Activated CD4-positive, alpha-beta T cell treated with anti-CD3 and anti-CD28 coated beads for 36 hours (primary cell): ENCODE measurements at regions of chr5 and their contacts with region 1.

Region 1: DNA sequence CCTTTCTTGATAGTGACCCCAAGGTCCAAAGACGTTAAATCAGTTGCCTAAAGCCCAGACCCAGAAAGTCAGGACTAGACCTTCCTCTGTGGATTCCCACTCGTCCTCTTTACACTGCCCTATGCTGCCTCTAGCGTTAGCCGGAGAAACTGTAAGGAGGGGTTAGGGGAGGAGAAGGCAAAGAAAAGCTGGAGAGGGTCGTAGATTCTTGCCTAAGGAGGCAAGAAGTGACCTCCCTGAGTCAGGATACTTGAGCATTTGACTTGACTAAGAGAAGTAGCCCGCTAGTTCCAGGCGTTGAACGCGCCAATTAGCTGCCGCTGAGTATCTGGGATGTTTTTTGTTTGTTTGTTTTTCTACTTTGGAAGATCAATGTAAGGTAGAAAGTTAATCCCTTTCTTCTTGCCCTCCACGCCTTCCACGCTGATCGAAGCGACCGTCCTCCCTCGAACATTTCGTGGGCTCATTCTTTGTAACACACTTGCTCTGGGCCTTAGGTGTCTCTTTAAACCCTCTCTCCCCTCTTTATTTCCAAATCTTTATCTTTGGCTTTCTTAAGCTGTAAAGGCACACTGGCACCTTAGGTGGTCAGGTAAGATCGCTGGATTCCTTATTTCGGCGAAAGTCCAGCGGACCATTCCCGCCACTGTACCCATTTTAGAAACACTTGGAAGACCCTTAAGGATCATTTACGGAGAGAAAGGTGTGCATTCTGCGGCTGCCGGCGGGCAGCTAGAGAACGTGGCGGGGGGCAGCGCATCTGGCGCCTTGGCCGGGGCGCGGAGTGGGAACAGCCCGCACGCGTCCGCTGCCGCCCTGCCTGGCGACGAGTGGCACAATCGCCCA is 5.1 kb upstream of the RGMB start:
- DNase-seq: peak; percentile 52
- ATAC-seq: peak; percentile 45
- H3K4me3 Mint-ChIP-seq: peak overlapping the region; percentile 76
- H3K27ac Mint-ChIP-seq: no peak overlapping the region
- H3K4me1 Mint-ChIP-seq: peaks cover 37% of the 10 kb centered on the region
- H3K27me3 Mint-ChIP-seq: peaks cover 45% of the 10 kb centered on the region

Region 2: DNA sequence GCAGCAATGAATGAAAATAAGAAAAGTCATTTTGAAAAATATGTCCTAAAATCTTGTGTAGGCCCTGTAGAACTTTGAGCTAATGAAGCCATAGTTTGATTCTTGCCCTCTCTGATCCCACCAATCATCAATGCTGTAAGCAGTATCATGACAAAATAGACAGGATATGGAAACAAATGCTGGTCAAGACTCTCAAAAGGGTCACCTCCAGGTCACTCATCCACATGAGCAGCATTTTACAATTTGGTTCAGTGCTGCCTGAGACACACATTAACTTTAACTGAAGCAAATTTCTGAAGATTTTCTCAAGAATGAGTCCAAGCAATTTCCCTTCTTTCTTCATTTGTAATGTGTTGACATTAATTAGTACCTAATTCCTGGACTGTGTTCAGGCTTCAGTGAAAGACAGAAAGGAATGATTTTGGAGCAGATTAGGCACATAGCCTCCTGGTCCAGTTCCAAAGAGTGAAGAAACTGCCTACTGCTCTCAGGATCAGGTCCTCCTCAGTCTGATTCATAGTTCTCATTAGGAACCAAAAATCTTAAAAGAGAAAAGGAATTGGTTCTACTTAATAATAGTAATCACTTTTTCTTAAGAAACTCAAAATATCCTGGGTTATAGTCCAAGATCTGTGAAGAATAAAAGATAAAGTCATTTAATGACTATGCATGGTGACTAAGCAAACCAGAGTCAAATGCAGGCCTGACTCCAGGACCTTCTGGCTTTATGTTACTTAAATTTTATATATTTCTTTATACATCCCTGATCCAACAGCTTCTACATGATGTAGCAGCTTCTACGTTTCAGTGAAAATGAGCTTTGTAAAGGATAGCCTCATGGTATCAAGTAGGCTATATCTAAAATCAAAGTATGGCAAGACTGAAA is 187.0 kb before region 1 on chr5:
- CTCF ChIA-PET with region 1: no interaction called
- POLR2A ChIA-PET with region 1: no interaction called
- intact Hi-C with region 1: no loop called
- DNase-seq: no peak
- ATAC-seq: no peak
- H3K4me3 Mint-ChIP-seq: no peak overlapping the region
- H3K27ac Mint-ChIP-seq: no peak overlapping the region
- H3K4me1 Mint-ChIP-seq: no peaks in the 10 kb centered on the region
- H3K27me3 Mint-ChIP-seq: peaks cover 5% of the 10 kb centered on the region

Region 3: GRCh38 chr5:98755406-98755805 is 13.0 kb before region 1 on chr5:
- CTCF ChIA-PET with region 1: interaction called, 25 read pairs
- POLR2A ChIA-PET with region 1: no interaction called
- intact Hi-C with region 1: no loop called
- DNase-seq: no peak
- ATAC-seq: no peak
- H3K4me3 Mint-ChIP-seq: no peak overlapping the region
- H3K27ac Mint-ChIP-seq: no peak overlapping the region
- H3K4me1 Mint-ChIP-seq: no peaks in the 10 kb centered on the region
- H3K27me3 Mint-ChIP-seq: peaks cover 8% of the 10 kb centered on the region

Region 4: DNA sequence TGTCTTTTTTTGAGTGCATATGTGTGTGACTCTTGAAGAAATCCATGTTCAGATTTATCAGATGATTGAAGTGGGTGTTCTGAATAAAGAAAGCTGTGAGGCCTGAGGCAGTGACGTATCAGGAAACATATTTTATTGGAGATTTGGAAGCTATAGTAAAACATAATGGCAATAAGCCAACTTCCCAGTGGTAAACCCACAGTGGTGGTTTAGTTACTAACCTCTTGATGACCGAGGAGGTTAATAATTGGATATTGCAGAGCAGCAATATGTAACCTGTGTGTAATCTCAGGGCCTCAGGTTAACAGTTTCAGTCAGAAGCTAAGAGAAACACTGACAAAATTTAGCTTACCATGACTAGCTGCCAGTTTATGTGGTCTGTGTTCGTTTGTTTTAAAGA is 12.0 kb after region 1 on chr5:
- CTCF ChIA-PET with region 1: interaction called, 30 read pairs
- POLR2A ChIA-PET with region 1: no interaction called
- intact Hi-C with region 1: no loop called
- DNase-seq: no peak
- ATAC-seq: no peak
- H3K4me3 Mint-ChIP-seq: no peak overlapping the region
- H3K27ac Mint-ChIP-seq: no peak overlapping the region
- H3K4me1 Mint-ChIP-seq: peaks cover 26% of the 10 kb centered on the region
- H3K27me3 Mint-ChIP-seq: peaks cover 4% of the 10 kb centered on the region

Region 5: DNA sequence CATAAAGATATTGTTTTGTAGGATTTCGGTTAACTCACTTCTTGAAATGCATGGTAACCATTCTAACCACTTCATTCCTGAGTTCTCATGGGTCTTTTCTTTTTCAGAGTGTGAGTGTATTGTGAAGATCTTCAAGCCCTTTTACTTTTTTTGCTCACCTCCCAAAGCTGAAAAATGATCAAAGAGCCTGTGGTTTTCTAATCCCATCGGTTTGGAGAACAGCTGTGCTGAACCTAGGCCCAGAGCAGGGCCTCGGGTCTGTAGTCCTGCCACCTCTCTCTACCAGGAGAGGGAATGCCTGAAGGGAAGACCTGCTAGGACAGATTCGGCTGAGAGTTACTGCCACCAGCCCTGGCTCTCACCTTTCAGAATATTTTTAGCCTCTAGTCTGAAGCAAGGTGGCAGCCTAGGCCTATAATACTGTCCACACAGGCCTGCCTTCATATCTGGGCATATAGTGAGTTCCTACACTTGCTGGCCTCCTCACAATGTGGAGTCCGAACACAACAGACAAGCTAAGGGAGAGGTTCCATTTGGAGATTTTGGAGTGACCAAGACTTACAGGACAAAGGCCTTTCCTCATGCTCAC is 18.8 kb after region 1 on chr5:
- CTCF ChIA-PET with region 1: interaction called, 10 read pairs
- POLR2A ChIA-PET with region 1: no interaction called
- intact Hi-C with region 1: no loop called
- DNase-seq: no peak
- ATAC-seq: no peak
- H3K4me3 Mint-ChIP-seq: no peak overlapping the region
- H3K27ac Mint-ChIP-seq: no peak overlapping the region
- H3K4me1 Mint-ChIP-seq: peaks cover 17% of the 10 kb centered on the region
- H3K27me3 Mint-ChIP-seq: no peaks in the 10 kb centered on the region

Region 6: DNA sequence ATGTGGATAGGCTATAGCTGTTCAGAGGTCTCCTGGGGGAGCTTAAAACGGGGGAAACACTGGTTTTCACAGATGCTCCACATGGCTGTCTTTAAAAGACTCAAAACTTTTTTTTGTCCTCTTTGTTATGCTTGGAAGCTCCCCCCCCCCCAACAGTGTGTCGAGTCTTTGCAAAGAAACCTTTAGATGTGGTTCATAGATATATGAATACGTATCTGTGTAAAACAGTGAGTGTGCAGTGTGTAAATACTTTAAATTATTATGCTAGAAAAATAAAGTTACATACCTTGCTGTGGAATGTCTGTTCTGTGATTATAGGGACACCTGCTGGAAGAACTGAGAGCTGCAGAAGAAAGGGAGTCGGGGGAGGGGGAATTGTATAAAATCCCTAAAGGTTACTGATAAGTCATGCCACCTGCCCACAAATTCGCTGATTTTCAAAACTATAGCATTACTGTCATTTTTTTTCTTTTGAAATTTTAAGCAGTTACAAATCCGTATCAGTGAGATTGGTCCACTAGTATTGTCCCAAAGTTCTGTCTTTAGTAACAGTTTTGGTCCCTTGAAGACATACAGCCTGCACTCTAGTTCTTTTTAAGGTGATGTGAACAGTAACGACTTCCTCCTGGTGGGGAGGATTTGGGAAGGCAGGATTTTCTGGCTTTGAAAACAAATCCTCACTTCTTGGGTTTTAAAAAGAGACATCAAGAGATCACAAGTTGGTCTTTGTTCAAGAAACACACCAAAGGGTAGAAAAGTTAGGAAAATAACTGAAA is 28.0 kb after region 1 on chr5:
- CTCF ChIA-PET with region 1: interaction called, 38 read pairs
- POLR2A ChIA-PET with region 1: no interaction called
- intact Hi-C with region 1: loop called in 1 of 2 experiments (anchors 1 kb)
- DNase-seq: peak; percentile 68
- ATAC-seq: peak; percentile 84
- H3K4me3 Mint-ChIP-seq: no peak overlapping the region
- H3K27ac Mint-ChIP-seq: no peak overlapping the region
- H3K4me1 Mint-ChIP-seq: peaks cover 6% of the 10 kb centered on the region
- H3K27me3 Mint-ChIP-seq: no peaks in the 10 kb centered on the region

Region 7: GRCh38 chr5:98827161-98827560 is 58.8 kb after region 1 on chr5:
- CTCF ChIA-PET with region 1: interaction called, 3 read pairs
- POLR2A ChIA-PET with region 1: no interaction called
- intact Hi-C with region 1: loop called in 1 of 2 experiments (anchors 2 kb)
- DNase-seq: no peak
- ATAC-seq: no peak
- H3K4me3 Mint-ChIP-seq: no peak overlapping the region
- H3K27ac Mint-ChIP-seq: no peak overlapping the region
- H3K4me1 Mint-ChIP-seq: no peaks in the 10 kb centered on the region
- H3K27me3 Mint-ChIP-seq: no peaks in the 10 kb centered on the region

Region 8: DNA sequence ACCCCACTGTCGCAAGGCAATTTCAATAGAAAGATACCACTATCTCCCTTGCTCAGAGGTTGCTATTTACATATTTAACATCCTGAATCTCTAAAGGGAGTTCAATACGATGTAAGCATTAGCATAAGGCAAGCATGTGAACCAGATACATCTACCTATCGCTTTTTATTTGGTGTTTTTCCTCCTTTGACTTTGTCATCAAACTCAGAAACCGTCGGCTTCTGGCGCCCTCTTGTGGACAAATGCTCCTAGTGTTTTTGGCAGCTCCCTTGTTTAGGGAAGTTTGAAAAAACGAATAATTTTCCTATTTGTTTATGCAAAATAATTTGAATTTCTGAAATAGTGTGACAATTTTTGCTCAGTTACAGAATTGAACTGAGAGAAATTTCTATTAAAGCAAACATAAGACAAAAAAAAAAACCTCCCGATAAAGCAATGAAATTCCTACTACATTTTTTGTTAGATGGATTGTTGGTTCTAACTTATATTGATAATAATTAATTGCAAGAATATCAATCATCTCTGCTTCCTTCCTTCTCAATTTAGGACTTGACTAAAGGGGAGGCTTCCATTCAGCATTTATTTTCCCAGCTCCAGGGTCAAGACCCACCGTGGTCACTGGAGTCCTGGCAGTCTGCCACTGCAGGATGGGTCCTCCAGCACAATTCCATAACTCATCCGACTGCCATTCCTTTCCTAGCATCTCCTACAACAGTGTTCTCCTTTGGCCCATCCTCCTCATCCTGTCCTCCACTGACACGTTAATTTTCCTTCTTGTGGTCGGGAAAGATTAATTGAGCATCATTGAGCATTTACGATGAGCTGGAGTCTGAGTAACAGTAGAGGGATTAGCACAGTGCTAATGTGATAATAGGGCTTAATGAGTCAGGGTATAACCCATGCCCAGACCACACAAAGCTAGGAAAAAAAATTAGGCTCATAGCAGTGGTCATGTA is 292.2 kb after region 1 on chr5:
- CTCF ChIA-PET with region 1: interaction called, 5 read pairs
- POLR2A ChIA-PET with region 1: no interaction called
- intact Hi-C with region 1: loop called (anchors 2 to 5 kb)
- DNase-seq: peak; percentile 91
- ATAC-seq: peak; percentile 60
- H3K4me3 Mint-ChIP-seq: no peak overlapping the region
- H3K27ac Mint-ChIP-seq: no peak overlapping the region
- H3K4me1 Mint-ChIP-seq: peaks cover 6% of the 10 kb centered on the region
- H3K27me3 Mint-ChIP-seq: peaks cover 9% of the 10 kb centered on the region